CD4-positive, alpha-beta T cell (primary cell): ENCODE measurements at regions of chr17 and their contacts with region 1.

Region 1: GRCh38 chr17:29579866-29580771 is 9.3 kb downstream of the GIT1 start:
- DNase-seq: peak; percentile 84 to 95 (median 88)
- ATAC-seq: peak; percentile 99
- H3K4me3 ChIP-seq: no peak overlapping the region
- H3K4me3 Mint-ChIP-seq: peak overlapping the region; percentile 69
- H3K27ac ChIP-seq: no peak overlapping the region
- H3K27ac Mint-ChIP-seq: peak overlapping the region; percentile 41
- H3K4me1 ChIP-seq: peaks cover 27% of the 10 kb centered on the region
- H3K4me1 Mint-ChIP-seq: peaks cover 27% of the 10 kb centered on the region
- H3K27me3 ChIP-seq: no peaks in the 10 kb centered on the region
- H3K27me3 Mint-ChIP-seq: no peaks in the 10 kb centered on the region
- CTCF ChIP-seq: peak; percentile 88

Region 2: GRCh38 chr17:28743225-28744103 is 836.7 kb before region 1 on chr17 and contains the start of gene TRAF4:
- CTCF ChIA-PET with region 1: no interaction called
- POLR2A ChIA-PET with region 1: no interaction called
- intact Hi-C with region 1: loop called in 1 of 2 experiments (anchors 10 kb)
- DNase-seq: peak in 13 of 14 experiments; percentile 53 to 92 (median 67)
- ATAC-seq: peak; percentile 88
- H3K4me3 ChIP-seq: peak within 1 kb of the TSS; percentile 76
- H3K4me3 Mint-ChIP-seq: peak within 1 kb of the TSS; percentile 90
- H3K27ac ChIP-seq: peak within 1 kb of the TSS; percentile 72 to 88
- H3K27ac Mint-ChIP-seq: peak within 1 kb of the TSS; percentile 88
- H3K4me1 ChIP-seq: peaks cover 59% of the 10 kb centered on the region
- H3K4me1 Mint-ChIP-seq: peaks cover 27% of the 10 kb centered on the region
- H3K27me3 ChIP-seq: no peaks in the 10 kb centered on the region
- H3K27me3 Mint-ChIP-seq: no peaks in the 10 kb centered on the region
- CTCF ChIP-seq: no peak
- total RNA-seq, gene TRAF4: 411 to 416 TPM

Region 3: GRCh38 chr17:29777663-29778062 is 197.5 kb after region 1 on chr17:
- CTCF ChIA-PET with region 1: interaction called, 6 read pairs
- POLR2A ChIA-PET with region 1: no interaction called
- intact Hi-C with region 1: loop called (anchors 1 kb)
- DNase-seq: no peak
- ATAC-seq: no peak
- H3K4me3 ChIP-seq: no peak overlapping the region
- H3K4me3 Mint-ChIP-seq: no peak overlapping the region
- H3K27ac ChIP-seq: no peak overlapping the region
- H3K27ac Mint-ChIP-seq: no peak overlapping the region
- H3K4me1 ChIP-seq: peaks cover 3% of the 10 kb centered on the region
- H3K4me1 Mint-ChIP-seq: peaks cover 9% of the 10 kb centered on the region
- H3K27me3 ChIP-seq: no peaks in the 10 kb centered on the region
- H3K27me3 Mint-ChIP-seq: no peaks in the 10 kb centered on the region
- CTCF ChIP-seq: no peak

Region 4: DNA sequence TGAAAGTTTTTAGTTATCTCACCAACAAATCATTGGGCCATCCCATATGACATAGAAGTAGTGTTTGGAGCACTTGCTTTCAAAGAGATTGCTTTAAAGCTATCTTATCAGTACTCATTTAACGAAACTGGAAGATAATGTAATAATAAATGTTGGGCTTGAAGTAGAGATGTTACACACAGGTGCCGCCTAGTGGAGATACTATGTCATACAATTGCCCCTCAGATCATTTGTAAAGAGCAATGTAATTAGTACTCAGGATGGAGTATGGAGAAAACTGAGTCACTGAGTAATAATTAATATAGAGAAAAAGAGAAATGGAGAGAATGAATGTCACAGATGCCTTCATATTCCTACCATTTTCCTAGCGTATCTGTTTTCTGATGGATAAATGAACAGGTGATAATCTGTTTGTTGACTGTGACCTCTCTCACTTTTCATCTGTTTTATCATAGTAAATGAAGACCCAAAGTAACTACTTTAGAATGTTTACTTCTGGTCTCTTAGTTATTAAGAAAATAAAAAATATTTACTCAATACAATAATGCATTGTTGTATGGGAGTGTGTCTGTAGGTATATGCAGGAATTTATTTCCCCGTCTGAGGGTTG is 441.7 kb after region 1 on chr17:
- CTCF ChIA-PET with region 1: interaction called, 5 read pairs
- POLR2A ChIA-PET with region 1: no interaction called
- intact Hi-C with region 1: loop called (anchors 1 to 2 kb)
- DNase-seq: peak in 9 of 14 experiments; percentile 3 to 73 (median 24)
- ATAC-seq: peak; percentile 78
- H3K4me3 ChIP-seq: no peak overlapping the region
- H3K4me3 Mint-ChIP-seq: no peak overlapping the region
- H3K27ac ChIP-seq: no peak overlapping the region
- H3K27ac Mint-ChIP-seq: no peak overlapping the region
- H3K4me1 ChIP-seq: no peaks in the 10 kb centered on the region
- H3K4me1 Mint-ChIP-seq: no peaks in the 10 kb centered on the region
- H3K27me3 ChIP-seq: no peaks in the 10 kb centered on the region
- H3K27me3 Mint-ChIP-seq: peaks cover 10% of the 10 kb centered on the region
- CTCF ChIP-seq: peak; percentile 98

Region 5: GRCh38 chr17:30093463-30094147 is 513.5 kb after region 1 on chr17:
- CTCF ChIA-PET with region 1: no interaction called
- POLR2A ChIA-PET with region 1: no interaction called
- intact Hi-C with region 1: loop called (anchors 1 to 5 kb)
- DNase-seq: peak in 11 of 14 experiments; percentile 5 to 74 (median 24)
- ATAC-seq: peak; percentile 51
- H3K4me3 ChIP-seq: no peak overlapping the region
- H3K4me3 Mint-ChIP-seq: no peak overlapping the region
- H3K27ac ChIP-seq: no peak overlapping the region
- H3K27ac Mint-ChIP-seq: no peak overlapping the region
- H3K4me1 ChIP-seq: peaks cover 6% of the 10 kb centered on the region
- H3K4me1 Mint-ChIP-seq: peaks cover 6% of the 10 kb centered on the region
- H3K27me3 ChIP-seq: peaks cover 3 to 4% of the 10 kb centered on the region in 2 experiments
- H3K27me3 Mint-ChIP-seq: peaks cover 26% of the 10 kb centered on the region
- CTCF ChIP-seq: peak; percentile 85

Region 6: DNA sequence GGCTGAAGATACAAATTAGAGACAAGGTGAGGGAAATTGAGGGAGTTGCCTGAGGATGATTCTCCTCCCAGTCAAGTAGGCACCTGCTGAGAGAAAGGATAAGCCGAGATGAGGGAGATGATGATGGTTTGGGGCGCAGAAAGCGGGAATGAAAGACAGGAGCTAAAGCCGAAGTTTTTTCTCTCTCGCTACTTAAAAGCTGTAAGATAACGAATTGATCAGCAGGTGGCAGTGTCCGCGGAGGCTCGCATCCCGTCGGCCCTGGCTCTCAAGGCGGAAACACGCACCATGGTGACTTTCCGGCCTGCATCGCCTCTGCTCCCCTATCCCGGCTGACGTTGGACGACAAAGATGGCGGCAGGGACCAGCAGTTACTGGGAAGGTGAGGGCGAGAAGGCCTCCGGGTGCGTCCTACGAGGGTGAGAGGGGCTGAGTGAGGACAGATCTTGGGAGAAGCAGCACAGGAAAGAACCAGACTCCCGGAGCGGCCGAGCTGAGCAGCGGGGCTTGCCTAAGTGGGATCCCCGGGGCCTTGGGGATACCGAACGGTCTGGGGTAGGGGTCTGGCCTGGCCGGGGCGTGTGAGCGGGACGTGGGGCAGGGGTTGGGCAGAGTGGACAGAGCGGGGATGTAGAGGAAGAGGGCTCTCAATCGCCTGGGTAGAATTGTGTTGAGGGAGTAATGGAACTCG is 897.1 kb after region 1 on chr17 and contains the start of gene GOSR1:
- CTCF ChIA-PET with region 1: no interaction called
- POLR2A ChIA-PET with region 1: no interaction called
- intact Hi-C with region 1: loop called in 1 of 2 experiments (anchors 10 kb)
- DNase-seq: peak; percentile 84 to 97 (median 90)
- ATAC-seq: peak; percentile 97
- H3K4me3 ChIP-seq: peak within 1 kb of the TSS; percentile 56
- H3K4me3 Mint-ChIP-seq: peak within 1 kb of the TSS; percentile 97
- H3K27ac ChIP-seq: peak within 1 kb of the TSS; percentile 71 to 99
- H3K27ac Mint-ChIP-seq: peak within 1 kb of the TSS; percentile 94
- H3K4me1 ChIP-seq: peaks cover 13% of the 10 kb centered on the region
- H3K4me1 Mint-ChIP-seq: peaks cover 48% of the 10 kb centered on the region
- H3K27me3 ChIP-seq: peaks cover 0 to 5% of the 10 kb centered on the region in 2 experiments
- H3K27me3 Mint-ChIP-seq: no peaks in the 10 kb centered on the region
- CTCF ChIP-seq: peak; percentile 73
- total RNA-seq, gene GOSR1: 43.2 to 45.6 TPM